Aorta (tissue), 5 donors: ENCODE measurements at regions of chr1 and their contacts with region 1.

Region 1: GRCh38 chr1:219304227-219305226 is 130.8 kb downstream of the LYPLAL1 start:
- DNase-seq: peak; percentile 81 to 89
- ATAC-seq: peak; percentile 71
- H3K4me3 ChIP-seq: peak overlapping the region; percentile 28 to 37
- H3K27ac ChIP-seq: peak overlapping the region; percentile 80 to 97
- H3K4me1 ChIP-seq: peaks cover 0 to 3% of the 10 kb centered on the region in 2 donors
- H3K27me3 ChIP-seq: no peaks in the 10 kb centered on the region

Region 2: DNA sequence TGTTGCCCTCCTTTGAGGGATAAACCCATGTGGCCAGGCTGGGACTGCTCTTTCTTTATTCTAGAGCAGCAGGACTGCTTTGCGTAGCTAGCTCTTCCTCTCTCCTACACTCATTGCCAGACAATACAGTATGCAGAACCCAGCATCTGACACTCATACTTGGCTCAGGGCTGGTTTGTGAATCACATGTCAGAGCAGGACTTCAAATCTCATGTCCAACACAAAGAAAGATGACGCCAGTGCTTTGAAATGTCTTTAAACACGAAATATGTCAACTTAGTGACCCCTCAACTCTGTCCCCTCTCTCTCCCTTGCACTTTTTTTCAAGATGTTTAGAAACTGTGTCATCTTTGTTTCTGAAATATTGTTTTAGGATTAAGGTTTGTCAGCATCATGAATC is 824.4 kb before region 1 on chr1:
- intact Hi-C with region 1: loop called in 1 of 2 experiments (anchors 10 kb)
- DNase-seq: peak in 1 of 2 donors; percentile 60
- ATAC-seq: peak; percentile 72
- H3K4me3 ChIP-seq: no peak overlapping the region
- H3K27ac ChIP-seq: peak overlapping the region; percentile 43 to 100
- H3K4me1 ChIP-seq: peaks cover 6 to 10% of the 10 kb centered on the region in 2 donors
- H3K27me3 ChIP-seq: no peaks in the 10 kb centered on the region

Region 3: DNA sequence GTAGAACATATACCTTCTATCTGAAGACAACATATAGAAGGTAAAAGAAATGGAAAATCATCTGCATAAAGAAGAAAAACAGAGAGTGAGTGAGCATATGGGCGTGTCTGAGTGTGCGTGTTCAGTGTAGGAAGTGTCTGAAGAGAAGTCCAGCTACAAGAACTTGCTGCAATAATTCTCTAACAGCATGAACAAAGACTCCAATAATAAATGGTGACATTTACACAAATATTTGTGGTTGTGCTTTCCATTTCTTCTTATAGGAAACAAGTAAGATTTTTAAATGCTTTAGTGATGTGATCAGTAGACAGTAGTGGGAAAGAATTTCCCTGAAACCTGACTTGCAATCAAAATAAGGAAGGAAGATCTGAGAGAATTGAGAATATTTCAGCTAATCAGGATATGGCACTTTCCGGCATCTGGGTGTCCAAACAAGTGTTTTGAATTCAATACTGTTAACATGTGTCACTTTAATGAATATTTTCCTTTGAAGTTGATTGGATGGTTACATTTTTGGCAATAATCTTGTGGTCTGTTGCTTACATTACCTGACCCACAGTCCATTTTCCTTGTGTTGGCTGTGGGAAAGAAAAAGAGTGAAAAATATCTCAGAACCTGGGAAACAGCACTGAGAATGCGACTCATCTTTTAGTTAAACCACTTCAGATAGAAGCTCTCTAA is 805.4 kb before region 1 on chr1:
- intact Hi-C with region 1: loop called in 1 of 2 experiments (anchors 10 kb)
- DNase-seq: no peak
- ATAC-seq: peak; percentile 37
- H3K4me3 ChIP-seq: peak overlapping the region; percentile 22 to 61
- H3K27ac ChIP-seq: peak overlapping the region; percentile 61 to 80
- H3K4me1 ChIP-seq: peaks cover 6 to 9% of the 10 kb centered on the region in 2 donors
- H3K27me3 ChIP-seq: no peaks in the 10 kb centered on the region

Region 4: DNA sequence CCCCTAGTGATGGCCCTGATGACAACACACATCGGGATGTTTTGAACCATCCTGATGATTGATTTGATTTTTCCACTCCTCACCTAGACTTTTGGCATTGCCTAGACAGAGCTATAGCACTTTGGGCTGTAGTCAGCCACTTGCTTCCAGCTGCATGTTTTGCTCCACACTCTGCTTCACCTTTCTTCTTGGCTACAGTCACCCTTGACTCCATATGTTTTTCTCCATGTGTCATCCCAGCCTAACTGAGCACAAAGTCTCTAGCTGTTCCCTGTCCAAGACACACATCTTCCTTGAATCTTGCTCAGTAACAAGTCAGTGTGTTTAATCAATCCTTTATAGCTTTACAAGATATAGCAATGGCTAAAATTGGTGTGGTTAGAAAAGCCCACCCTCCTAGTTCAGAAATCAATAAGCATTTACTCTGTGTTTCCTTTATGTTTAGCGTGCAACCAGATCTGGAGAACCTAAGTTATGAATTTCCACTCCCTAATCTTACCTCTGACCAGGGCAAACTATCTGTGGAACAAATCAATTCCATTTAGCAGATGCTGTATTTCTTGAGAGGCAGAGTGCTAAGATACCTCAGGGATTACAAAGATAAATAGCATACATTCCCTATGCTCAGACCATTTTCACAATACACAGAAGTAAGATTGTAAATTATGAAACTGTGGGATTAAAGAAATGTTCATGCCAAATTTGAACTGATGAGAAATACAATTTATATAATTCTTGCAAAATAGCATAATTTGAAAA is 229.2 kb before region 1 on chr1:
- intact Hi-C with region 1: no loop called
- DNase-seq: no peak
- ATAC-seq: no peak
- H3K4me3 ChIP-seq: no peak overlapping the region
- H3K27ac ChIP-seq: no peak overlapping the region
- H3K4me1 ChIP-seq: no peaks in the 10 kb centered on the region
- H3K27me3 ChIP-seq: no peaks in the 10 kb centered on the region

Region 5: GRCh38 chr1:219120624-219121544 is 183.6 kb before region 1 on chr1:
- intact Hi-C with region 1: loop called in 1 of 2 experiments (anchors 10 kb)
- DNase-seq: peak in 1 of 2 donors; percentile 45
- ATAC-seq: peak; percentile 85
- H3K4me3 ChIP-seq: peak overlapping the region in 1 of 2 donors; percentile 26
- H3K27ac ChIP-seq: no peak overlapping the region
- H3K4me1 ChIP-seq: no peaks in the 10 kb centered on the region
- H3K27me3 ChIP-seq: no peaks in the 10 kb centered on the region

Region 6: DNA sequence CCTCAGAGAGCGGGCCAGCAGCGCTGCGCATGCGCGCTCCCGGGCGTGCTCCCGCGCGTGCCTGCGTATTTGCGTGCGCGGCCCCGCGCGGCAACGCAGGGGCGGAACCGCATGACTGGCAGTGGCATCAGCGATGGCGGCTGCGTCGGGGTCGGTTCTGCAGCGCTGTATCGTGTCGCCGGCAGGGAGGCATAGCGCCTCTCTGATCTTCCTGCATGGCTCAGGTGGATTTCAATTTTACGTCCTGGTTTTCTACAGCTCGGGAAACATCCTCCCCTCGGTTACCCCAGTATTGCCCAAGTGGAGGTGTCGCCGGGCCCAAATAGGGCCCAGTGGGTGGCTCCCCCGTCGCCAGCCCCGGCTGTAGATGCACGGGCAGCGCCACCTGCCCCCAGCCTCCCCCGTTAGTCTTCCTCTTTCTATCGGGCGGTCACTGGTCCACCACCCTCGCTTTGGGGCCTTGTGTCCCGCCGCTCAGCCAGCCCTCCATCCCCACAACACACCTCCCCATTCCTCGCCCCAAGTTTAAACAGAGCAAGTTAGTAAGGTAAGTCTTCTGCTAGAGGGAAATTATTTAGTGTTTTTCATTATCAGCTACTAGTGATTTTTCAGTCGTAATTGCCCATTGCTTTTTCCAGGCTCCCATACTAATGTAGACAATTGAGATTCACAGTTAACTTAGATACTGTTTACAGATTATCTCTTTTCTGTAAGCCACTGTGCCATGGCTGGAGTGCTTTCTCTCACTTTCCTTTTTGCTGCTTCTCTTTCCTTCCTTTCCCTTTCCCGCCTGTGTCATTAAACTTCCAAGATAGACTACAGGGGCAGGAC is 130.6 kb before region 1 on chr1 and contains the start of gene LYPLAL1:
- intact Hi-C with region 1: loop called in 1 of 2 experiments (anchors 5 kb)
- DNase-seq: peak; percentile 94 to 97
- ATAC-seq: peak; percentile 97
- H3K4me3 ChIP-seq: peak within 1 kb of the TSS; percentile 36 to 66
- H3K27ac ChIP-seq: peak within 1 kb of the TSS; percentile 73 to 79
- H3K4me1 ChIP-seq: peaks cover 4 to 10% of the 10 kb centered on the region in 2 donors
- H3K27me3 ChIP-seq: no peaks in the 10 kb centered on the region
- total RNA-seq, gene LYPLAL1: 35.1 to 47.0 TPM